GM10248 (cell line): ENCODE measurements at regions of chr1 and their contacts with region 1.

Region 1: GRCh38 chr1:147242439-147243227 is at the start of gene CHD1L:
- DNase-seq: peak; percentile 92
- CTCF ChIP-seq: peak; percentile 98

Region 2: DNA sequence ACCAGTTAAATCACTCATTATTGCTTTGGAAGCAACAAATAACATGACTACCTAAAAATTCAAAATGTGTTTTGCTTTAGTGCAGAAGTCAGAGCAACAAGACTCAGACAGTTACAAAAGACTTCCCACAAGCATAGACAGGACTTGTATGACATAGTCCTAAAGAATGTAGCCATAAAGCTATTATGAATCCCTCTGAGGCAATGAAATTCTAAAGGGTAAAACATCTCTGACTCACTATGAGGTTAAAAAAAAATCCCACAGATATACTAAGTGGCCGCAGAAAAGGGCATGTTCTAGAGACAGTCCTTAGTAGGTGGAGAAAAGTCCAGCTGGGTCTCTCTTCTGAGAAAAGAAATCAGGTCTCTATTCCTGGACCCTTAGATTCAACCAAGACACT is 75.3 kb before region 1 on chr1:
- CTCF ChIA-PET with region 1: interaction called, 14 read pairs
- POLR2A ChIA-PET with region 1: no interaction called
- DNase-seq: no peak
- CTCF ChIP-seq: no peak

Region 3: DNA sequence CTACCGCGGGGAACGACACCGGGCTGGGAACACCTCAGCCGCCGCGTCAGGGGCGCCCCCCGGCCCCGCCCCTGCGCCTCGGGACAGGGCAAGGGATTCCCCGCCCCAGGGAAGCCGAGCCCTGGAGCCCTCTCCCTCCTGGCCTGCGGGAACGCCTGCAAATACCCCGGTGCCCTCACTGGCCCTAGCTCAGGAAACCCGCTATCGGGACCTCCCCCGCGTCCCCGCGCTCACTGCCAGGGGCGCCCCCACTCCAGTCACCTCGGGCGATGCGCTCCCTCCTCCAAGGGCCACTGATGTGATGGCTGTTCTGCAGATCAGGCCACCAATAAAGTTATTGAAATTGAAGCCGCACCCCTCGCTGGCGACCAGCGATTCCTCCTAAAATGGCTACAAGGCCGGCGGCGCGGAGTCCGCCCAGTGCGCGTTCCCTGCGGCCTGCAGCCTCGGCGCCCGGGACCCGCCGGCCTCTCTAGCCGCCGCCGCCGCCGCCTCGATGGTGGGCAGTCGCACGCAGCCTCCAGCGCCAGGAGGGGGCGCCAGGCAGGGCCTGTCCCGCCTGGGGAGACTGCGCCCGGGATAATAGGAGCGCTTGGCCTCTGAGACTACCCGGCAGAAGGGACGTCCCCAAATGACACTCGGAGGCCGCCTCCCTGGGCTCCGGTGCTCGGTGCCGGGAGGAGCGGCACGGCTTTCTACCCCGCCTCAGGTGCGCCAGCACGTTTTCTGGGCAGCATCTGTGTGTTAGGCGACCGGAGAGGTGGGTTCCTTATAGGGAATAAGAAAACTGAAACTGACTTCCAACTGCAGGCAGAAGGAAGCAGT is 70.3 kb before region 1 on chr1 and contains the start of gene PRKAB2:
- CTCF ChIA-PET with region 1: interaction called, 16 read pairs
- POLR2A ChIA-PET with region 1: no interaction called
- DNase-seq: peak; percentile 94
- CTCF ChIP-seq: peak; percentile 95

Region 4: GRCh38 chr1:147225193-147225730 is 17.4 kb before region 1 on chr1 and contains the start of gene FMO5:
- CTCF ChIA-PET with region 1: interaction called, 28 read pairs
- POLR2A ChIA-PET with region 1: no interaction called
- DNase-seq: peak; percentile 62
- CTCF ChIP-seq: no peak